ENCODE measurements at regions of chr1 and their contacts with region 1.

Region 1: DNA sequence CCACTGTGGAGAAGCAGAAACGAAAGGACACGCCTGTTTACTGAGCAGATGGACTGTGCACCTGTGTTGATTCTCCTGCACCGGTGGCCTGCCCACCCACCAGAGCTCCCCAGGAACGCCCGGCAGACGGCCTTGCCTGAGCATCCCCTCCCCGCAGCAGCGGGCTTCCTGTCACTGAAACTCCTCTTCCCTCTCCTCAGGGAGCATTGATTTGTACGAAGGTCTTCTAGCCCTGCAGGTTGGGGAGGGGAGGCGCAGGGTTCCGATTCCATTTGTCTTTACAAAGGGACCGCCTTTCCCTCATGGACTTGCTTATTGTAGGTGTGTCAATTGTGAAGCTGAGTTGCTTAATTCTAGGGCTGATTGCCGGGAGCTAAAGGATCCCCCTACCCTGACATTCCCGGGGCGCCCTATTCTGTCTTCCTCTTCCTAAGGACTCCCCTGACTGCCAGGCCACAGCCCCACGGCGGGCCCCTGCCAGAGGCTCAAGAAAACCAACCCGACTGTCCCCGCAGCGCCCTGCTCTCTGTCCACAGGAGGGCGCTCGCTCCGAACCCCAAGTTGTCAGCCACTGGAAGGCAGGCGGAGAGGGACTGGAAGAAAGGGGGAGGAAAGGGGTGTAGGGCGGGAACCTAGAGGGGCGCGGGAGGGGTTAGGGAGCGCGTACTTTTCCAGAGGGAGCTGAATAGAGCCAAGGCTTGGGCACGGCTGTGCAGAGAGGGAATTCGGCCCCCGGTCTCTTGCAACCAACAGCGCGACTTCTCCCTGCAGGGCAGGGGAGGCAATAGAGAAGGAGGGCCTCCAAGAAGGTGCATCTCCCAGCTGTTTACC is 2.8 kb downstream of the S100A6 start:
- DNase-seq: peak; percentile 94
- ATAC-seq: peak; percentile 85
- H3K4me3 Mint-ChIP-seq: peak overlapping the region; percentile 63
- H3K27ac Mint-ChIP-seq: peak overlapping the region; percentile 85
- H3K4me1 Mint-ChIP-seq: peaks cover 44% of the 10 kb centered on the region
- H3K27me3 Mint-ChIP-seq: peaks cover 37% of the 10 kb centered on the region
- CTCF ChIP-seq: peak; percentile 72

Region 2: DNA sequence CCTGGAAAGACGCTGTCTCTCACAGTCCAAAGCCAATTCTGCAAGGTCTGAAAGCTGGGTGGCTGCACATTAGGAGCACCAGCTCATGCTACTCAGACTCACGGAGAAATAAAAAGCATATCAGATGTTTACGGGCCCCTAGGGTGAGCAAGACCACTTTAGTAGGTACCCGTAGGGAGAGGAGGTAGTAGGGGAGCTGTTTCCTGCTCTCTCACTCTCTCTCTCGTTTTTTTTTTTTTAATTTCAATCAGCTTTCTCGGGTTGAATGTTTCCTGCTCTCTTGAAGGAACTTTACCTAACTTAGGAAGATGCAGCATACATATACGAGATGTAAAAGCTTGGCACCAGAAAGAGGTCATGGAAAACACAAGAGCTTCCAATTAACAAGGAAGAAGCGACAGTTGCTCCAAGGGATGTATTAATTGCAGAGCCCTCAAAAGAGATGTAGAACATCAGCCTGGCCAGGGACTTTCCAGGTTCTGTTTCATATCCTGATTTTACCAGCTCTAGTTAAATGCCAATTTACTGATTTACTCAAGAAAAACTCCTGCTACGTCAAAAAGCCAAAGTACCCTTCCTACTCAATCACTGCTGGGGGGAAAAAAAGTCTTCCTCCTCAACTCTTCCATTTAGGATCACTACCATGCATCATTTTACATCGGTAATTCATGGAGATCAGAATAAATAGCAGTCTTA is 270.4 kb before region 1 on chr1:
- CTCF ChIA-PET with region 1: no interaction called
- POLR2A ChIA-PET with region 1: no interaction called
- DNase-seq: no peak
- ATAC-seq: no peak
- H3K4me3 Mint-ChIP-seq: peak overlapping the region; percentile 79
- H3K27ac Mint-ChIP-seq: no peak overlapping the region
- H3K4me1 Mint-ChIP-seq: peaks cover 13% of the 10 kb centered on the region
- H3K27me3 Mint-ChIP-seq: peaks cover 85% of the 10 kb centered on the region
- CTCF ChIP-seq: no peak

Region 3: DNA sequence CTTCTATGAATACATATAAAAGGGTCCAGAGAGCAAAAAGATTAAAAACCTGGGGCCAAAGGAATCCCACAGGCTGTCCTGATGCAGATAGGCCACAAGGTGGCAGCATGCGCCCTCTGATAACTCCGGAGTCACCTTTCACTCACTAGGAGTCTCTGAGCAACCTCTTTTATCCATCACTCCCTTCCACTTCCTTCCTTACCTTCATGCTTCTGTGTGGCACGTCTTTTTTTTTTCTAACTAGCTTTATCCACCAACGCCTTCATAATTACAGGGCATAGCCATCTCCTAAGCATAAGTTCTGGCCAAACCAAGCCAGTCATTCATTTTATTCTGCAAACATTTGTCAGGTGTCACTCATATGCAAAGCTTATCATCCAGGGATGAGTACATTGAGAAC is 180.5 kb before region 1 on chr1:
- CTCF ChIA-PET with region 1: interaction called, 13 read pairs
- POLR2A ChIA-PET with region 1: no interaction called
- DNase-seq: peak; percentile 68
- ATAC-seq: peak; percentile 29
- H3K4me3 Mint-ChIP-seq: no peak overlapping the region
- H3K27ac Mint-ChIP-seq: no peak overlapping the region
- H3K4me1 Mint-ChIP-seq: peaks cover 6% of the 10 kb centered on the region; the same call in 1 of the 2 replicates
- H3K27me3 Mint-ChIP-seq: peaks cover 18% of the 10 kb centered on the region; the same call in 1 of the 2 replicates
- CTCF ChIP-seq: peak; percentile 76

Region 4: DNA sequence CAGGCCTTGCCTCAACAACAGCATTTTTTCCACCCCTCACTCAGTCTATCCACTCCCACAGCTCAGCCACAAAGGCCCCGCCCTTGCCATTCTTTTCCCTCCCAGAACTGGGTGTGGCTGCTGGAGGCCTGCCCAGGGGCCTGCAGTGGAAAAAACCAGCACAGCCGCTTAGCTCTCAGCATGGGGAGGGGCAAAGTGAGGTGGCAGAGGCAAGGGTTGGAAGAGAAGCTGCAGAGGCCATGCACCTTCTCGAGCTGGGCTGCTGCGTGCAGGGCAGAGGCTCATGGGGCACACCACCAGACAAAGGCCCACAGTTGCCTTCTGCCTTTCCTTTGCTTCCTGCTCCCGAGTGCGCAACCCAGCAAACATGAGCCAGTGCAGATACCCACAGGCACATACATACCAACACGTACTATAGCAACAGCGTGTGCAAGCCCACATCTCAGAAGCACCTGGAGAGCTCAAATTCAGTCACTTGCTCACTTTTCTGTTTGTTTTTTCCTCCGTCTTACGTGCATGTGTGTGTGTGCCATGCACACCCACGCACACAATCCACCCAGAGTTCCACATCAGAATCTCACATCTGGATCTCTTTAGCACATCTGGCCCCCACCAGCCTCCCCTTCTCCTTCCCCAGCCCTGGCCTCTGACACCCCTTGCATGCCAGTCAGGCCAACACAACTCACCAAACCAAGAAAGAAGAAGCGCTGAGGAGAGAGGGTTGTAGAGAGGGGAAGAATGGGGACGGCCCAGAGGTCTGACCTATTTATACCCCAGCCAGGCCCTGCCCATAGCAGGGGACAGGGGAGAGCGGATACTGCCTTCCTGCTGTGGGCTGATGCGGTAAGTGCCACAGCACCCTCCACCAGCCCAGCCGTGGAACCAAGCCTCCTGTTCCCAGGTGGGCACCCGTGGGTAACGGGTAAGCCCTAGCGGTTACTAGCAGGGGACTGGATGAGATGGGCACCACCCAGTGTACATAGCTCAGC is 12.4 kb after region 1 on chr1 and contains the start of gene S100A4:
- CTCF ChIA-PET with region 1: interaction called, 52 read pairs
- POLR2A ChIA-PET with region 1: no interaction called
- DNase-seq: peak; percentile 88
- ATAC-seq: peak; percentile 89
- H3K4me3 Mint-ChIP-seq: peak within 1 kb of the TSS; percentile 64
- H3K27ac Mint-ChIP-seq: peak within 1 kb of the TSS; percentile 96
- H3K4me1 Mint-ChIP-seq: peaks cover 65% of the 10 kb centered on the region
- H3K27me3 Mint-ChIP-seq: no peaks in the 10 kb centered on the region; the same call in 1 of the 2 replicates
- CTCF ChIP-seq: no peak
- total RNA-seq, gene S100A4: 22.7 to 32.0 TPM (median 31.7 TPM) in 3 replicates

Region 5: DNA sequence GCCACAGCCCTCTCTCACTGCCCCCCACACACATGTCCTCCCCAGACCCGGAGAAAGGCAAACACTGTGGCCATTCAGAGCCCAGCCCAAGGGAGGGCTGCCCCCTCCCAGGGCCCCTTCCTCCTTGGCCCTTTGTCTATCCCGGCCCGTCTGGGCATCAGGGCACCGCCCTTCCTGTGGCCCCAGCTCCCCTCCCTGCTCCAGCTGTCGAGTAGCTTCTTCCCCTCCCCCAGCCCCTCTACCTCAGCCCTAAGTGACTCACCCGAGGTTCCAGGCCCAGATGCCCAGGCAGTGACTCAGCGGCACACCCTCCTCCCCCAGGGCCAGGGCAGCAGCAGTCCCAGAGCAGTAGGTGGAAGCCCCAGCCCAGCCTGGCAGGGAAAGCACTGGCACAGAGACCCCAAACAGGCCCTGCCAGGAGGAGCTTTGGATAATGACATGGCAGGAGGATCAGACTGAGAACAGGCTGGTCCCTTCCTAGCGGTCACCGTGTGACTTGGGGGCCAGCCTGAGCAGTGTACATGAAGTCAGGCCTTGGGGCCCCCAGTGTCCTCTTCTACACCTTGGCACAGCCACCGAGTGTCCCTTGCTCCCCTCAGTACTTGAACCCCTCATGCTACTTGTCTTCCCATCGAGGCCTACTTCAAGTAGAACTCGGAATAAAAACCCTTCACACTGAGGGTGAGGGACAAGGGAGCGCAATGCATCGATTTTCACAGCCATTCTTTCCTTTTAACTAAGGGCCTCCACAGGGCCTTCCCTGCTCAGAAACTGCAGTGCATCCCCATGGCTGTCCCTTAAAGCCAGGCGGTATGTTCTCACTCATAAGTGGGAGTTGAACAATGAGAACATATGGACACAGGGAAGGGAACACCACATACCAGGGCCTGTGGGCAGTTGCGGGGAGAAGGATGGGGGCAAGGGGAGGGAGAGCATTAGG is 33.7 kb after region 1 on chr1:
- CTCF ChIA-PET with region 1: interaction called, 188 read pairs
- POLR2A ChIA-PET with region 1: interaction called, 7 read pairs
- DNase-seq: peak; percentile 65
- ATAC-seq: peak; percentile 72
- H3K4me3 Mint-ChIP-seq: no peak overlapping the region
- H3K27ac Mint-ChIP-seq: peak overlapping the region; percentile 85
- H3K4me1 Mint-ChIP-seq: peaks cover 33% of the 10 kb centered on the region
- H3K27me3 Mint-ChIP-seq: no peaks in the 10 kb centered on the region
- CTCF ChIP-seq: no peak

Region 6: GRCh38 chr1:153617675-153618074 is 84.7 kb after region 1 on chr1:
- CTCF ChIA-PET with region 1: interaction called, 15 read pairs
- POLR2A ChIA-PET with region 1: no interaction called
- DNase-seq: peak; percentile 62
- ATAC-seq: peak; percentile 68
- H3K4me3 Mint-ChIP-seq: no peak overlapping the region
- H3K27ac Mint-ChIP-seq: no peak overlapping the region
- H3K4me1 Mint-ChIP-seq: peaks cover 22% of the 10 kb centered on the region
- H3K27me3 Mint-ChIP-seq: no peaks in the 10 kb centered on the region
- CTCF ChIP-seq: peak; percentile 31

Measured in WTC11 (cell line).